ENCODE measurements at regions of chr11 and their contacts with region 1.

Region 1: DNA sequence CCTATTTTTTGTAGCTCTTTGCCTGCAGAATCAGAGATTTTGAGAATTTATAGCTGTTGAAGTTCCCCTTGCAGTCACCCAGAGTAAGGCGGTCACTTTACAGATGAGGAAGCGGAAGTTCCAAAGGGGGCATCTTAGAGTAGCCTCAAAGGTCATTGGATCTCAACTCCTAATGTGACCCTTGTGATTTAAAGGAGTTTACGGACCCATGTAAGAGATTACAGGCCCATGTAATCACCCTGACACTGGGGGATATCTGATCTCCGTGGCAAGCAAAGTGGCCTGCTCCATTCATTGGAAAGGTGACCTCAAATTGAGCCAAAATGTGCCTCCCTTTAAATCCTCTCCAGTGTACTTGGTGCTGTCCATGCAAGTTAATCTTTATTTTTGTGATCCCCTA is 15.7 kb downstream of the P2RX3 start:
- DNase-seq: peak in 2 of 3 donors; percentile 59 to 66
- H3K4me3 ChIP-seq: peak overlapping the region in 2 of 7 experiments; percentile 28 to 50
- H3K27ac ChIP-seq: peak overlapping the region; percentile 51 to 56
- H3K4me1 ChIP-seq: peaks cover 26 to 68% (median 57%) of the 10 kb centered on the region in 4 experiments
- H3K27me3 ChIP-seq: no peaks in the 10 kb centered on the region

Region 2: DNA sequence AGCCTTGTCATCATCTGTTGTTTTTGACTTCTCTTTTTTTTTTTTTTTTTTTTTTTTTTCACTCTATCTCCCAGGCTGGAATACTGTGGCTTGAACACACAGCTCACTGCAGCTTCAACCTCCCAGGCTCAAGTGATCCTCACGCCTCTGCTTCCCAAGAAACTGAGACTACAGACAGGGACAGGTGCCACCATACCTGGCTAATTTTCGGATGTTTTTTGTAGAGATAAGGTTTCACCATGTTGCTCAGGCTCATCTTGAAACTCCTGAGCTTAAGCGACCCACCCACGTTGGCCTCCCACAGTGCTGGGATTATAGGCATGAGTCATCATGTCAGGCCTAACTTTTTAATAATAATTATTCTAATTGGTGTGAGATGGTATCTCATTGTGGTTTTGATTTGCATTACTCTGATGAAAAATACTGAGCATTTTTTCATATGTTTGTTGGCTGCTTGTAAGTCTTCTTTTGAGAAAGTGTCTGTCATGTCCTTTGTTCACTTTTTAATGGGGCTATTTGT is 554.1 kb before region 1 on chr11:
- CTCF ChIA-PET with region 1: no interaction called
- POLR2A ChIA-PET with region 1: no interaction called
- DNase-seq: no peak
- H3K4me3 ChIP-seq: no peak overlapping the region
- H3K27ac ChIP-seq: no peak overlapping the region
- H3K4me1 ChIP-seq: no peaks in the 10 kb centered on the region
- H3K27me3 ChIP-seq: no peaks in the 10 kb centered on the region

Region 3: GRCh38 chr11:57426929-57427726 is 73.3 kb after region 1 on chr11 and contains the start of gene SLC43A3:
- CTCF ChIA-PET with region 1: interaction called, 14 read pairs
- POLR2A ChIA-PET with region 1: interaction called, 4 read pairs
- DNase-seq: peak; percentile 72 to 90 (median 84)
- H3K4me3 ChIP-seq: peak within 1 kb of the TSS in 6 of 7 experiments; percentile 54 to 81 (median 71)
- H3K27ac ChIP-seq: peak within 1 kb of the TSS; percentile 69 to 82
- H3K4me1 ChIP-seq: peaks cover 13 to 62% (median 46%) of the 10 kb centered on the region in 4 experiments
- H3K27me3 ChIP-seq: no peaks in the 10 kb centered on the region

Region 4: DNA sequence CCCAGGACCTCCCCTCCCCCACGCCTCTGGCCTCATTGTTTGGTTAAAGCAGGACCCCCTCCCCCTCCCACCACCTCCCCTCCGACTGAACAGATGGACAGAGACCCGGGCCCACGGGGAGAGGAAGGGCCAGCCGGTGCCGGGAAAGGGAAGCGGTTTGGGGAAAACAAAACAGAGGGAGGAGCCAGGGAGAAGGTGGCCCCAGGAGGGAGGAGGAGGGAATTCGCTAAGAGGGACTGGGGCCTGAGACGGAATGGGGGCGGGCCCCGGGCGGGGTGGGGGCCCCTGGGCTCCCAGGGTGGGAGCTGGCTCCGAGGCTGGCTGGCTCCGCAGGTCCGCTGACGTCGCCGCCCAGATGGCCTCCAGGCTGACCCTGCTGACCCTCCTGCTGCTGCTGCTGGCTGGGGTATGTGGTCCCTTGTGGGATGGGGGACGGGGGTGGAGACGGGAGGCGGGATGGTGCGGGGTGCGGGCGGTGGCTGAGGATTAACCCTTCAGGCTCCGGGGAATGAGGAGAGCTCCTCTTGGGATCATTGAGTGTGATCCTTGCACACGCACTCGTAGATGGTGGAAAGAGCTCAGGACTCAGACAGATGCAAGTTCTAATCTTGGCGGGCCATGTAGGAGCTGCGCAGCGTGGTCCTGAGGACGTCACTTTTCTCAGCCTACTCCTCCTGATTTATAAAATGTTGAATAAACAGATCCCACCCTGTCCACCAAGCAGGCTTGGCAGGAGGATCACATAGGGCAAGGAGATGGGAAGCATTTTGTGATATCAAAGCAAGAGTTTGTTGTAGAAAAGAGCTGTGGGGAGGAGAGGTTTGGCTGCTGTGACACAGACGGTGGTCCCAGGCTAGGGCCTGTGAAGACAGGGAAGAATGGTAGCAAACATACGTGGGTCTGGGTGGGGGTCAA is 244.3 kb after region 1 on chr11:
- CTCF ChIA-PET with region 1: no interaction called
- POLR2A ChIA-PET with region 1: no interaction called
- DNase-seq: peak in 2 of 3 donors; percentile 24 to 31
- H3K4me3 ChIP-seq: peak overlapping the region; percentile 28 to 81 (median 70)
- H3K27ac ChIP-seq: no peak overlapping the region
- H3K4me1 ChIP-seq: peaks cover 0 to 26% (median 24%) of the 10 kb centered on the region in 4 experiments
- H3K27me3 ChIP-seq: no peaks in the 10 kb centered on the region